GM10248 (cell line): ENCODE measurements at regions of chr15 and their contacts with region 1.

Region 1: GRCh38 chr15:64809649-64810496 is 15.6 kb downstream of the PIF1 start:
- DNase-seq: peak; percentile 86
- CTCF ChIP-seq: peak; percentile 96

Region 2: GRCh38 chr15:64247906-64248541 is 561.8 kb before region 1 on chr15:
- CTCF ChIA-PET with region 1: no interaction called
- POLR2A ChIA-PET with region 1: no interaction called
- DNase-seq: peak; percentile 62
- CTCF ChIP-seq: no peak

Region 3: DNA sequence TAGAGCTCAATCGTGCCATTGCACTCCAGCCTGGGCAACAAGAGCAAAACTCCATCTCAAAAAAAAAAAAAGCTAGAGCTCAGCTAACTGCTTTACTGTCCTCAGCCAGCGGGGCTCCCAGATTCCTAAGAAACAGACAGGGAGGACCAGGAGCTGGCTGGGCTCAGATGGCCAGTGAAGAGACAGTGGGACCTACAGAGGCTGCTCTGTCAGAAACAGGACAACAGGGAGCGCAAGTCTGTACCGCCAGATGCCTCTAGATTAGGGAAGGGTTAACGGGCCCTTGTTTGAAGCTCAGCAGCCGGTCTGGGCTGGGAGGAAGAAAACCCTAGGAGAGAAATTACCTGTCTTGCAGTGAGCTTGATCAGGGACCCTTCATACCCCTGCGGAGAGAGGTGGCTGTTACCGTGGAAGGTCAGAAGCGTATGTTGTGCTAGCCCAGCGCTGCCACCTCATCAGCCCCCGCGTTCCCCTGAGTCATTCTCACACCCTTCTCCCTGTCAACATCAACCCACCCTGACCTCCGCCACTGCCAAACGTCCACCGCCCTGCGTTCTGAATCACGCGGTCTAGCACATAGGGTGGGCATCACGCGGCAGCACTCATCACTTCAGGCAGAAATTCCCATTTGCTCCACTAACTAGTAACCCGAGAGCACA is 59.7 kb before region 1 on chr15:
- CTCF ChIA-PET with region 1: interaction called, 15 read pairs
- POLR2A ChIA-PET with region 1: no interaction called
- DNase-seq: no peak
- CTCF ChIP-seq: no peak

Region 4: DNA sequence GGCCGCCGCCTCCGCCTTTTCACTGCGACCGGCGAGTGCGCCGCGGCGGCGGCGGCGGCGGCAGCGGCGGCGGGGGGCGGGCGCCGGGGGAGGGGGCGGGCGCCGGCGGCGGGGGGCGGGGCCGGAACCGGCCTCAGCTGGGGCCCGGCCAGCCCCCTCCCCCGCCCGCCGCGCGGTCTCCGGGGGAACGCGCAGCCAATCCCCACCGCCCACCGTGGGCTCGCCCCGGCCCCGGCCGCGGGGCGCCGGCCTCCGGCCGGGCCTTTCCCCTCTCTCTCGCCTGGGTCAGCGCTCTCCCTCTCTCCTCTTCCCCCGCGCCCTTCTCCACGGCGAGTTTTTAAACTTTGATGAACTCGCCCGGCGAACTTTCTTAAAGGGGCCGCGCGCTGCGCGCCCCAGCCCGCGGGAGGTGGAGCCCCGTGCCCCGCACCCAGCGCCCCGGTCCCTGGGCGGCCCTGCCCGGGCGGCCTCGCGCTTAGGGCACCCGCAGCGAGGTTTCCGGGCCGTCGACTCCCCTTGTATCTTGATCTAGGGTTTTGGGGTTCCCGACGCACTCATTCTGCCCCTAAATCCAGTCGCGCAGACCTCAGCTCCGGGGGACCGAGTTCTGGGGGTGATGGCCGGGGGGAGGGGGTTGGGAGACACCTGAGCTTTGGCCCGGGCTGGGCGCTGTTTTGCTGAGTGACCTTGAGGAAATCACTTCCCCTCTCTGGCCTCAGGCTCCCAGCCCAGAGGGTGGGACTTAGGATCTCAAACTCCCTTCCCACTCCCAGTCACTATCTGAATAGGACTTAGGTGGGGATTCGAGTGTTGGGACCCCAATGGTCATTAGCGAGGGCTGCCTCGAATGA is 34.1 kb before region 1 on chr15 and contains the start of gene RBPMS2:
- CTCF ChIA-PET with region 1: interaction called, 51 read pairs
- POLR2A ChIA-PET with region 1: no interaction called
- DNase-seq: peak; percentile 68
- CTCF ChIP-seq: no peak

Region 5: DNA sequence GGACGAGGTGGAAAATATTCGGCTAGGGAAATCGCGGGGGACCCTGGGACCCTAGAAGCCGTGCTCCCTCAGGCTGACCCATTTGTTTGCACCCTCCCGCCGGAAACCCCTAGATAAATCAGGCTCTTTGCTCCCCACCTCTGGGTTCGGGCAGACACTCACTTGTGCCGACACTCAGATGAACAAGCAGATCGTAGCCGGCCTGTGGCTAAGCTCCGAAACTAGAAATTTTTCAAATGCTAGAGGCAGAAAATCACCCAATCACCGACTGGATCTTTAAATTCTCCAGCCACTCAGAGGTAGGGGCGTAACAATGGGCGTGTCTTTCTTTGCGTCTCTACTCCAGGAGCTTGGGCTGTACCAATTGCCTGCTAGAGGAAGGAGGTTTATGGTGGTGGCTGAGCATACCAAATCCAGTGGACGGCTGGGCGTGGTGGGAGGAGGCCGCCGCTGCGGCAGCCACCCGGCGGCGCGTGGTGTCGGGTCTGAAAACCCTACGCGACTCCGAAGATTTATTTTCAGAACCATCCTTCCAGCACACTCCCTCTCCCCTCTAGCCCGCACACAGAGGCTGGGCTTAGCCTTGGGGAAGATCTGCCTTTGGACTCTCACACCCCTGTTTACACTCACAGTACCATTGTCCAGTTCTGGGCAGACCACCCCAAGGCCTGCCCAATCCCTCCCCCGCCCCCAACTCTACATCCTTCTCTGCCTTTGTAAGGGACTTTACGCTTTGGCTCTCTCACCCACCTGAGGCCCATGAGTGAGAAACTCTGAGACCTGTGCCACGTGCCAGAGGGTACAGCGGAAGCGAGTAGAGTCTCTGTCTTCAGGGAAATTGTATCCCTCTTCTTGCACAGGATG is 15.8 kb after region 1 on chr15 and contains the start of gene PIF1:
- CTCF ChIA-PET with region 1: interaction called, 55 read pairs
- POLR2A ChIA-PET with region 1: no interaction called
- DNase-seq: peak; percentile 95
- CTCF ChIP-seq: no peak

Region 6: DNA sequence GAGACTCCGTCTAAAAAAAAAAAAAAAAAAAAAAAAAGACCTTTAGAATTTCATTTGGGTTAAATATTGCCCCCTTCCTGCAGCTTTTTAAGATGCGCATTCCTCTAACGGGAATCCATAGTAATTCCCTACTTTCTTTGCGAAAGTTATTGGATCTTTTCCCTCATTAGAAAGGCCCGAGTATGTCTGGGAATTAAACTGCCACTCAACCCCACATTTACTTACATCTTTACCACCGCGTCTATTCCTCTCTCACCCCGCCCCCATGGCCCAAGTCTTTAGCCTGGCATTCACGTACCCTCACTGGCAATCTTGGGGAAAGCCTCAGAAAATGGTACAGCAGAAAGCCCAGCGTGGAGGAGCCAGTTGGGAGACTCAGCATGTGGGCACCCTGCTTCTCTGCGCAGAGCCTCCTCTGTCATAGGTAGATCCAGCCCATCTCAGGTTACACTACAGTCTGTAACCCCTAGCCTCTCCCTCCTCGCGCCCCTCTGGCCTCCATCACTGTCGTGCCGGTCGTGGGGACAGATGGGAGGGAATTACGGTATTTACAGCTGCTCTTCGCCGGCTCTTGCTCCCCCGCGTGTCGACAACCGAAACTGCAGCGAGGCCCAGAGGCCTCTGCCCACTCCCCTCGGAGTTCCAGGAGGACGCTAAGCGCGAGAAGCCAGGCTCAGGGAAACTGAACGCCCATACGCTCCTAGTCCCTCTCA is 95.4 kb after region 1 on chr15:
- CTCF ChIA-PET with region 1: interaction called, 19 read pairs
- POLR2A ChIA-PET with region 1: no interaction called
- DNase-seq: peak; percentile 85
- CTCF ChIP-seq: peak; percentile 93

Region 7: DNA sequence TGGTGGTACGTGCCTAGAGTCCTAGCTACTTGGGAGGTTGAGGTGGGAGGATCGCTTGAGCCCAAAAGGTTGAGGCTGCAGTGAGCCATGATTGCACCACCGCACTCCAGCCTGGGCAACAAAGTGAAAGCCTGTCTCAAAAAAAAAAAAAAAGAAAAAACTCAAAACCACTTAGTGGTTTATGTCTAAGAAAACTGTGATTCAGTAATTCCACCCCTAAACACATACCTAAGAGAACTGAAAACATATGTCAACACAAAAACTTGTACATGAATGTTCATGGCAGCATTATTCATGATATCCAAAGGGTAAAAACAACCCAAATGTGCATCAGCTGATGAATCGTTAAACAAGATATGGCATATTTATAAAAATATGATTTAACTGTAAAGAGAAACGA is 165.5 kb after region 1 on chr15:
- CTCF ChIA-PET with region 1: no interaction called
- POLR2A ChIA-PET with region 1: no interaction called
- DNase-seq: no peak
- CTCF ChIP-seq: no peak